ENCODE measurements at regions of chr4 and their contacts with region 1.

Region 1: GRCh38 chr4:138035781-138036258 is 206.3 kb downstream of the SLC7A11 start:
- DNase-seq: peak; percentile 54
- H3K4me3 ChIP-seq: no peak overlapping the region
- H3K27ac ChIP-seq: peak overlapping the region; percentile 76
- H3K4me1 ChIP-seq: peaks cover 21% of the 10 kb centered on the region
- H3K27me3 ChIP-seq: no peaks in the 10 kb centered on the region
- CTCF ChIP-seq: peak; percentile 48 to 68

Region 2: GRCh38 chr4:137961051-137961438 is 74.8 kb before region 1 on chr4:
- CTCF ChIA-PET with region 1: no interaction called
- dilution Hi-C with region 1: no loop called
- in situ Hi-C with region 1: no loop called
- intact Hi-C with region 1: loop called (anchors 1 kb)
- DNase-seq: peak; percentile 91
- H3K4me3 ChIP-seq: peak overlapping the region in 1 of 3 experiments; percentile 1
- H3K27ac ChIP-seq: peak overlapping the region; percentile 66
- H3K4me1 ChIP-seq: peaks cover 30% of the 10 kb centered on the region
- H3K27me3 ChIP-seq: no peaks in the 10 kb centered on the region
- CTCF ChIP-seq: no peak

Region 3: GRCh38 chr4:138162259-138162658 is 126.4 kb after region 1 on chr4:
- CTCF ChIA-PET with region 1: no interaction called
- dilution Hi-C with region 1: no loop called
- in situ Hi-C with region 1: no loop called
- intact Hi-C with region 1: loop called (anchors 5 kb)
- DNase-seq: peak; percentile 57
- H3K4me3 ChIP-seq: no peak overlapping the region
- H3K27ac ChIP-seq: peak overlapping the region; percentile 59
- H3K4me1 ChIP-seq: peaks cover 16% of the 10 kb centered on the region
- H3K27me3 ChIP-seq: no peaks in the 10 kb centered on the region
- CTCF ChIP-seq: no peak

Region 4: GRCh38 chr4:138494931-138495330 is 459.1 kb after region 1 on chr4:
- CTCF ChIA-PET with region 1: interaction called, 3 read pairs
- dilution Hi-C with region 1: no loop called
- in situ Hi-C with region 1: no loop called
- intact Hi-C with region 1: loop called (anchors 1 kb)
- DNase-seq: peak; percentile 54
- H3K4me3 ChIP-seq: no peak overlapping the region
- H3K27ac ChIP-seq: no peak overlapping the region
- H3K4me1 ChIP-seq: no peaks in the 10 kb centered on the region
- H3K27me3 ChIP-seq: no peaks in the 10 kb centered on the region
- CTCF ChIP-seq: peak; percentile 20 to 40

Region 5: GRCh38 chr4:138680989-138681604 is 645.3 kb after region 1 on chr4:
- CTCF ChIA-PET with region 1: interaction called, 4 read pairs
- dilution Hi-C with region 1: no loop called
- in situ Hi-C with region 1: no loop called
- intact Hi-C with region 1: loop called (anchors 1 kb)
- DNase-seq: peak; percentile 49
- H3K4me3 ChIP-seq: no peak overlapping the region
- H3K27ac ChIP-seq: no peak overlapping the region
- H3K4me1 ChIP-seq: no peaks in the 10 kb centered on the region
- H3K27me3 ChIP-seq: no peaks in the 10 kb centered on the region
- CTCF ChIP-seq: peak; percentile 81 to 83